B cell (primary cell): ENCODE measurements at regions of chr2 and their contacts with region 1.

Region 1: DNA sequence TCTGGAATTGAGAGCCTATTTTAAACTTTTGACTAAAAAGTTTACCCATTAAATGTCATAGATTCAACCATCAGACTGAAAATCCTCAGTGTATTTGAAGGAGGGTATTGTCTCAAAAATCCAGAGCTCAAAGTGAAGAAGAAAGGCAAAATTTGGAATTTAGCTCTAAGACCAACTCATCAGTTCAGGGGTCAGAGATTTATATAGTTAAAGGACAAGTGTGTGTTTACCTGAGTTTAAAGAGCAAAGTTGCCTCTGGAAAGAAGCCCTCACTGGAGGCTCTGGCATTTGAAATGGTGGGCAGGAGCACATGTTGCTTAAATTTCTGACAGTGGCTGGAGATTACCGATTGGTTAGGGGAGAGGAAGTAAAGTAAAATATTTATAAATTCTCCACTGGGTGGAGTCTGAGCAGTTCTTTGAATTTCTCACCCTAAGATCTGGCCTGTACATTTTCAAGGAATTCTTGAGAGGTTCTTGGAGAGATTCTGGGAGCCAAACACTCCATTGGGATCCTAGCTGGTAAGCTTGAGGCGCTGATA is at the start of gene KYNU:
- DNase-seq: peak; percentile 70
- ATAC-seq: peak; percentile 77
- H3K4me3 ChIP-seq: peak within 1 kb of the TSS; percentile 53 to 80 (median 61)
- H3K4me3 Mint-ChIP-seq: peak within 1 kb of the TSS; percentile 91
- H3K27ac ChIP-seq: peak within 1 kb of the TSS; percentile 84 to 85
- H3K27ac Mint-ChIP-seq: peak within 1 kb of the TSS; percentile 91
- H3K4me1 ChIP-seq: peaks cover 49 to 55% of the 10 kb centered on the region in 2 donors
- H3K4me1 Mint-ChIP-seq: peaks cover 72% of the 10 kb centered on the region
- H3K27me3 ChIP-seq: no peaks in the 10 kb centered on the region
- H3K27me3 Mint-ChIP-seq: no peaks in the 10 kb centered on the region
- CTCF ChIP-seq: peak; percentile 49
- total RNA-seq, gene KYNU: 46.2 and 50.4 TPM in 2 replicates

Region 2: DNA sequence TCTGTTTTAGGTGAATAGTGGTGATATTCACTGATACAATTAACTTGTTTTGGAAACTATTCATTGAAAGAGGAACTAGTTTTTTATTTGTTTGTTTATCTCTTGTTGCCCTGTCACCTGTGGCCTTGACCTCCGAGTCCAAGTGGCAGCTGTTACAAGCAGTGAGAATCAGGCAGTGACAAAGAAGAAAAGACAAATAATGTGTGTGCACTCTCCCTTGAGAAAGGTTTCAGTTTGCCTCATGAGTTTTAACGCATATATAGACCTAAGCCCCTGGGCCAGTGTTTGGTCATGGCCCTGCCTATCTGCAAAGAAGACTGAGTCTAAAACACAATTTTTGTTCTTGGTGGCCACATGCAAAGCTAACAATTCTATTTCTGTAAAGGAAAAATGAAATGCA is 15.4 kb after region 1 on chr2:
- CTCF ChIA-PET with region 1: interaction called, 3 read pairs
- POLR2A ChIA-PET with region 1: interaction called, 7 read pairs
- intact Hi-C with region 1: loop called (anchors 2 kb)
- DNase-seq: peak; percentile 62
- ATAC-seq: peak; percentile 79
- H3K4me3 ChIP-seq: no peak overlapping the region
- H3K4me3 Mint-ChIP-seq: peak overlapping the region; percentile 2
- H3K27ac ChIP-seq: peak overlapping the region; percentile 54 to 65
- H3K27ac Mint-ChIP-seq: peak overlapping the region; percentile 67
- H3K4me1 ChIP-seq: peaks cover 3 to 13% of the 10 kb centered on the region in 2 donors
- H3K4me1 Mint-ChIP-seq: peaks cover 55% of the 10 kb centered on the region
- H3K27me3 ChIP-seq: no peaks in the 10 kb centered on the region
- H3K27me3 Mint-ChIP-seq: no peaks in the 10 kb centered on the region
- CTCF ChIP-seq: no peak

Region 3: GRCh38 chr2:142944276-142944675 is 67.0 kb after region 1 on chr2:
- CTCF ChIA-PET with region 1: no interaction called
- POLR2A ChIA-PET with region 1: no interaction called
- intact Hi-C with region 1: no loop called
- DNase-seq: no peak
- ATAC-seq: no peak
- H3K4me3 ChIP-seq: no peak overlapping the region
- H3K4me3 Mint-ChIP-seq: no peak overlapping the region
- H3K27ac ChIP-seq: no peak overlapping the region
- H3K27ac Mint-ChIP-seq: no peak overlapping the region
- H3K4me1 ChIP-seq: no peaks in the 10 kb centered on the region
- H3K4me1 Mint-ChIP-seq: peaks cover 6% of the 10 kb centered on the region
- H3K27me3 ChIP-seq: no peaks in the 10 kb centered on the region
- H3K27me3 Mint-ChIP-seq: no peaks in the 10 kb centered on the region
- CTCF ChIP-seq: no peak

Region 4: GRCh38 chr2:144256996-144257707 is 1379.9 kb after region 1 on chr2:
- CTCF ChIA-PET with region 1: no interaction called
- POLR2A ChIA-PET with region 1: no interaction called
- intact Hi-C with region 1: no loop called
- DNase-seq: no peak
- ATAC-seq: no peak
- H3K4me3 ChIP-seq: no peak overlapping the region
- H3K4me3 Mint-ChIP-seq: no peak overlapping the region
- H3K27ac ChIP-seq: no peak overlapping the region
- H3K27ac Mint-ChIP-seq: no peak overlapping the region
- H3K4me1 ChIP-seq: no peaks in the 10 kb centered on the region
- H3K4me1 Mint-ChIP-seq: peaks cover 13% of the 10 kb centered on the region
- H3K27me3 ChIP-seq: no peaks in the 10 kb centered on the region
- H3K27me3 Mint-ChIP-seq: no peaks in the 10 kb centered on the region
- CTCF ChIP-seq: no peak